Mammary epithelial cell (primary cell): ENCODE measurements at regions of chr1 and their contacts with region 1.

Region 1: GRCh38 chr1:26921540-26922430 is at the start of gene NUDC:
- DNase-seq: peak; percentile 96
- H3K4me3 ChIP-seq: peak within 1 kb of the TSS; percentile 56 to 76 (median 71)
- H3K27ac ChIP-seq: peak within 1 kb of the TSS; percentile 86
- H3K4me1 ChIP-seq: peaks cover 21% of the 10 kb centered on the region
- H3K27me3 ChIP-seq: no peaks in the 10 kb centered on the region
- CTCF ChIP-seq: no peak
- total RNA-seq, gene NUDC: 22.7 to 96.8 TPM

Region 2: GRCh38 chr1:26907071-26907917 is 14.5 kb before region 1 on chr1:
- CTCF ChIA-PET with region 1: no interaction called
- dilution Hi-C with region 1: no loop called
- in situ Hi-C with region 1: no loop called
- intact Hi-C with region 1: loop called (anchors 1 kb)
- DNase-seq: peak; percentile 97
- H3K4me3 ChIP-seq: no peak overlapping the region
- H3K27ac ChIP-seq: peak overlapping the region; percentile 54
- H3K4me1 ChIP-seq: peaks cover 16% of the 10 kb centered on the region
- H3K27me3 ChIP-seq: no peaks in the 10 kb centered on the region
- CTCF ChIP-seq: no peak